IMR-90 (cell line): ENCODE measurements at regions of chr3 and their contacts with region 1.

Region 1: GRCh38 chr3:150823277-150823676 is 60.3 kb upstream of the SIAH2 start:
- DNase-seq: no peak
- ATAC-seq: no peak
- H3K4me3 ChIP-seq: no peak overlapping the region
- H3K27ac ChIP-seq: no peak overlapping the region
- H3K4me1 ChIP-seq: no peaks in the 10 kb centered on the region
- H3K27me3 ChIP-seq: peaks cover 15% of the 10 kb centered on the region
- CTCF ChIP-seq: no peak
- POLR2A ChIP-seq: no peak
- RAD21 ChIP-seq: no peak

Region 2: DNA sequence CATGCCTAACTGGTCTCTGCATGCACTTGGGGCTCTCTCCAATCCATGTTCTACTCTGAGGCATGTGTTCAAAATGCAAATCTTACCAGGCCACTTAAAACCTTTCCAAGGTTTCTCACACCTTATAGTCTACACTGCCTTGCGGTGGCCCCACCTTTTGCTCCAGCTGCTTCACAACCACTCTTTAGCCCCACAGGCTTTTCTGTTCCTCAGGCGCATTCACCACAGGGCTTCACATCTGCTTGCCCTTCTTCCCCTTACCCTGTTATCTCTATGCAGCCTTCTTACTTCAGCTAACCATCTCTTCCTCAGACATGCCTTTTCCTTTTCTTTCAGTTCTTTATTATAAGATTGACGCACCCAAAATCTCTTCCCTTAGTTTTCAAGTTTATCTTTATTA is 44.2 kb after region 1 on chr3:
- CTCF ChIA-PET with region 1: no interaction called
- POLR2A ChIA-PET with region 1: no interaction called
- dilution Hi-C with region 1: no loop called
- in situ Hi-C with region 1: no loop called
- intact Hi-C with region 1: no loop called
- DNase-seq: no peak
- ATAC-seq: no peak
- H3K4me3 ChIP-seq: no peak overlapping the region
- H3K27ac ChIP-seq: no peak overlapping the region
- H3K4me1 ChIP-seq: no peaks in the 10 kb centered on the region; the same call in 1 of the 2 replicates
- H3K27me3 ChIP-seq: peaks cover 4% of the 10 kb centered on the region; the same call in 1 of the 2 replicates
- CTCF ChIP-seq: no peak
- POLR2A ChIP-seq: no peak
- RAD21 ChIP-seq: no peak

Region 3: GRCh38 chr3:151124476-151124875 is 301.2 kb after region 1 on chr3:
- CTCF ChIA-PET with region 1: no interaction called
- POLR2A ChIA-PET with region 1: interaction called, 10 read pairs
- dilution Hi-C with region 1: no loop called
- in situ Hi-C with region 1: no loop called
- intact Hi-C with region 1: no loop called
- DNase-seq: no peak
- ATAC-seq: no peak
- H3K4me3 ChIP-seq: no peak overlapping the region
- H3K27ac ChIP-seq: no peak overlapping the region
- H3K4me1 ChIP-seq: no peaks in the 10 kb centered on the region
- H3K27me3 ChIP-seq: peaks cover 5% of the 10 kb centered on the region
- CTCF ChIP-seq: no peak
- POLR2A ChIP-seq: no peak
- RAD21 ChIP-seq: no peak

Region 4: DNA sequence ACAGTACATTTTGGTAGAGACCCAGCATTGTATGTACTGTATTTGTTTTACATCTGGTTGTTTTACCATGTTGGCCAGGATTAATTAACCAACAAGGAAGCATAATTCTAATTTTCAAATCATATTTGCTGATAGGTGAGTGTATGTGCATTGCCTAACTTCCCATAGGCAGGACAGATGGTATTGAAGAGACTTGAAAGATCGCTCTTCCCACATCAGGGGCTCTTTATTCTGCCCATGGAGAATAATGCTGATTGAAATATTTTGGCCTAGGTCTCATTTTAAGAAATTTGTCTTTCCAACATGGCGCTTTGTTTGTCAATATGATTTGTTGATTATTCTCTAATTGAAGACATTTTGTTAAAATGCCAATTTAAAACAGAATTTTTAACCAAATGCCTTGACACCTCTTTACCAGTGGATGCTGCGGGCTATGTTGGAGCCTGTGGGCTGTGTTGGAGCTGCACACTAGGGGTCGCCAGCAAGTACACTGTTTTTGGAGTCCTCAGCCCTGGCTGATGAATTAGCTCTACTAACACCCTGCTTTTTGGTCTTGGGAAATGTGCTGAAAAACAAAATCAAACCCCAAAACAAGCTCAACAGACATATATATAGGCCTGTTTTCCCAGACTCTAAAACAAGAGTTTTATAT is 555.9 kb after region 1 on chr3:
- CTCF ChIA-PET with region 1: no interaction called
- POLR2A ChIA-PET with region 1: no interaction called
- dilution Hi-C with region 1: no loop called
- in situ Hi-C with region 1: no loop called
- intact Hi-C with region 1: no loop called
- DNase-seq: no peak
- ATAC-seq: peak; percentile 64
- H3K4me3 ChIP-seq: no peak overlapping the region
- H3K27ac ChIP-seq: no peak overlapping the region
- H3K4me1 ChIP-seq: no peaks in the 10 kb centered on the region
- H3K27me3 ChIP-seq: no peaks in the 10 kb centered on the region
- CTCF ChIP-seq: peak; percentile 50
- POLR2A ChIP-seq: no peak
- RAD21 ChIP-seq: peak; percentile 34